Caco-2 (cell line): ENCODE measurements at regions of chr1 and their contacts with region 1.

Region 1: DNA sequence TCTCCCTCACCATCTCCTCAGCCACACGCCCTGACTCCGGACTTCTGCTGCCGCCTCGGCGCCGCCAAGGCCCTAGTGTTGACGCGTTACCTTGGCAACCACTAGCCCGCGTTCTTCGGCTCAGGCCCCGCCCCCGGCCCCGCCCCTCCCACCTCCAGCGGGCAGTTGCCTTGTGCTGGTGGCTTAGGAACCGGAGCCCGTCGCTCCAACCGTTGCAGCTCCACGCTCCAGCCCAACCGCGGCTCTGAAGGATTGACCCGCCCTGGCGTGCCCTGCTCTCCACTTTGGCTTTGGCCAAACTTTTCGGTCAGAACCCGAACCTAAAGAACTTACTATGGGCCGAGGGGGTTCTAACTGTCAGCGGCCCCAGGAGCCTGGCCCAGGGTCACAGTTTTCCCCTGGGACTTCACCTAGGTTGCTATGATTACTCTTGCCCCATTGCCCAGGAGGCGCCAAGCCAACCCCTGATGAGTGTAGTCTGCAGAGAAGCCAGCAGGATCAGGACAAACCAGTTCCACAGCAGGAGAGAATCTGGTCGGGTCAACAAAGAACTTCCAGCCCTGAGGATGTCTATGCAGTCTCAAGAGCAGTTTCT is at the start of gene CFAP45:
- DNase-seq: peak; percentile 70 to 77
- H3K4me3 ChIP-seq: no peak within 1 kb of the TSS
- H3K4me3 Mint-ChIP-seq: peak within 1 kb of the TSS; percentile 64
- H3K27ac Mint-ChIP-seq: peak within 1 kb of the TSS; percentile 98
- H3K4me1 ChIP-seq: peaks cover 54% of the 10 kb centered on the region
- H3K4me1 Mint-ChIP-seq: peaks cover 47% of the 10 kb centered on the region
- H3K27me3 ChIP-seq: no peaks in the 10 kb centered on the region
- H3K27me3 Mint-ChIP-seq: no peaks in the 10 kb centered on the region
- CTCF ChIP-seq: no peak
- total RNA-seq, gene CFAP45: 1.1 and 1.5 TPM in 2 replicates

Region 2: GRCh38 chr1:159924981-159925712 is 25.0 kb after region 1 on chr1 and contains the start of gene TAGLN2:
- CTCF ChIA-PET with region 1: no interaction called
- POLR2A ChIA-PET with region 1: no interaction called
- intact Hi-C with region 1: loop called (anchors 2 kb)
- DNase-seq: peak; percentile 91 to 92
- H3K4me3 ChIP-seq: peak within 1 kb of the TSS; percentile 63
- H3K4me3 Mint-ChIP-seq: peak within 1 kb of the TSS; percentile 74
- H3K27ac Mint-ChIP-seq: peak within 1 kb of the TSS; percentile 98
- H3K4me1 ChIP-seq: peaks cover 42% of the 10 kb centered on the region
- H3K4me1 Mint-ChIP-seq: peaks cover 43% of the 10 kb centered on the region
- H3K27me3 ChIP-seq: no peaks in the 10 kb centered on the region
- H3K27me3 Mint-ChIP-seq: no peaks in the 10 kb centered on the region
- CTCF ChIP-seq: no peak
- total RNA-seq, gene TAGLN2: 518 and 531 TPM in 2 replicates